Gastrocnemius medialis (tissue), 4 donors: ENCODE measurements at regions of chr5 and their contacts with region 1.

Region 1: GRCh38 chr5:140220032-140220697 is 45.2 kb downstream of the CYSTM1 start:
- DNase-seq: peak in 1 of 2 donors; percentile 11
- ATAC-seq: peak; percentile 10
- H3K4me3 ChIP-seq: no peak overlapping the region
- H3K27ac ChIP-seq: peak overlapping the region; percentile 84 to 97 (median 94)
- H3K4me1 ChIP-seq: peaks cover 89 to 99% of the 10 kb centered on the region in 2 donors
- H3K27me3 ChIP-seq: no peaks in the 10 kb centered on the region
- CTCF ChIP-seq: no peak
- POLR2A ChIP-seq: peak in 1 of 2 donors; percentile 11

Region 2: DNA sequence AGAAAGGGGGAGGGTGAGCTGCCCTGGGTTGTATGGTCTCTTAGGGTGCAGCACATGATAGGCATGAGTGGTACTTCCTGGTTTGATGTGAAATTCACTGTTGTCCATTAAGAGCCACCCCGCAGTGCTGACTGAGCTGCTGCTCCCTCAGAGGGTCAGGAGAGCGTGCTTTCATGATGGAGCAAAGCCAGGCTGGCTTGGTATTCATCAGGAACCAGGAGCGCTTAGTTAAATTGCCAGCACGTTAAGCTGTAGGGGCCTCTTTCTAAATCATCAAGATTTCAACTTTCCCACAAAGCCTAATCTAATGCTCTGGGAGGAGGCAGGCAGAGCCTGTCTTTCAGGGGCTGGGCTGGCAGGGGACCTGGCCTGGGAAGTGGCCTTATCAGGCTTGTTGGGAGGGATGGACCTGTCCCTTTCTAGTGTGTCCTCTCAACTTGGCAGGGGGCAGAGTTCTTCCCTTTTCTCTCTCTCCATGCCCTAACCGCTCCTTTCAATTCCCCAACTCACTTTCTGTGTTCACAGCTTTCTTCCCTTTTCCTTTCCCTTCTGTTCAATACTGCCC is 37.3 kb before region 1 on chr5:
- in situ Hi-C with region 1: no loop called
- intact Hi-C with region 1: loop called (anchors 2 kb)
- DNase-seq: peak; percentile 37 to 51
- ATAC-seq: peak; percentile 18 to 31
- H3K4me3 ChIP-seq: no peak overlapping the region
- H3K27ac ChIP-seq: peak overlapping the region; percentile 97 to 99 (median 98)
- H3K4me1 ChIP-seq: peaks cover 77 to 88% of the 10 kb centered on the region in 2 donors
- H3K27me3 ChIP-seq: no peaks in the 10 kb centered on the region
- CTCF ChIP-seq: no peak
- POLR2A ChIP-seq: no peak

Region 3: GRCh38 chr5:140312067-140312790 is 92.1 kb after region 1 on chr5:
- in situ Hi-C with region 1: no loop called
- intact Hi-C with region 1: no loop called
- DNase-seq: peak in 1 of 2 donors; percentile 26
- ATAC-seq: peak; percentile 51 to 53
- H3K4me3 ChIP-seq: no peak overlapping the region
- H3K27ac ChIP-seq: peak overlapping the region; percentile 64 to 76 (median 72)
- H3K4me1 ChIP-seq: peaks cover 25 to 28% of the 10 kb centered on the region in 2 donors
- H3K27me3 ChIP-seq: no peaks in the 10 kb centered on the region
- CTCF ChIP-seq: no peak
- POLR2A ChIP-seq: no peak

Region 4: GRCh38 chr5:140322751-140323731 is 102.9 kb after region 1 on chr5:
- in situ Hi-C with region 1: no loop called
- intact Hi-C with region 1: no loop called
- DNase-seq: peak in 1 of 2 donors; percentile 31
- ATAC-seq: peak; percentile 35 to 55
- H3K4me3 ChIP-seq: no peak overlapping the region
- H3K27ac ChIP-seq: peak overlapping the region; percentile 54 to 71 (median 66)
- H3K4me1 ChIP-seq: peaks cover 26 to 31% of the 10 kb centered on the region in 2 donors
- H3K27me3 ChIP-seq: no peaks in the 10 kb centered on the region
- CTCF ChIP-seq: no peak
- POLR2A ChIP-seq: no peak

Region 5: DNA sequence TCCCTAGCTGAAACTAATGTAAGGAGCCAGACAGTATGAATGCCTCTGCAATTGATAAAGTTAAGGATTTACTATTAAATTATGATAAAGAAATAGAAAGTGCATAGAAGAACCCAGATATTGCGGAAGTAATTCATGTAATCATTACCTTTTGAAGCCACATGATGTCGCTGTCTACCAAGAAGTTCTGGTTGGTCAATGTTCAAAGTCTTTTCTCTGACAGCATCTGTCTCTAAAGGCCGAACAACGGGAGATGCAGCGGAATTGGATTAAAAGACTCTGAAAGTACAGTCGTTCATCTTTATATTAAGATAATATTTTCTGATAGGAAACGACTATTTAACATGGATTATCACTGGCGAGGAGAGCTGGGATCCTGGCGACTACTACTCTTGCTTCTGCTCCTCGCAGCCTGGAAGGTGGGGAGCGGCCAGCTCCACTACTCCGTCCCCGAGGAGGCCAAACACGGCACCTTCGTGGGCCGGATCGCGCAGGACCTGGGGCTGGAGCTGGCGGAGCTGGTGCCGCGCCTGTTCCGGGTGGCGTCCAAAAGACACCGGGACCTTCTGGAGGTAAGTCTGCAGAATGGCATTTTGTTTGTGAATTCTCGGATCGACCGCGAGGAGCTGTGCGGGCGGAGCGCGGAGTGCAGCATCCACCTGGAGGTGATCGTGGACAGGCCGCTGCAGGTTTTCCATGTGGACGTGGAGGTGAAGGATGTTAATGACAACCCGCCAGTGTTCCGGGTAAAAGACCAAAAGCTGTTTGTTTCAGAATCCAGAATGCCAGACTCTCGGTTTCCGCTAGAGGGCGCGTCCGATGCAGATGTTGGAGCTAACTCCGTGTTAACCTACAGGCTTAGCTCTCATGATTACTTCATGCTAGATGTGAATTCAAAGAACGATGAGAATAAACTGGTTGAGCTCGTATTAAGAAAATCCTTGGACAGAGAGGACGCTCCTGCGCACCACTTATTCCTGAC is 621.1 kb after region 1 on chr5 and contains the start of gene PCDHA8:
- in situ Hi-C with region 1: no loop called
- intact Hi-C with region 1: no loop called
- DNase-seq: no peak
- ATAC-seq: no peak
- H3K4me3 ChIP-seq: no peak within 1 kb of the TSS
- H3K27ac ChIP-seq: no peak within 1 kb of the TSS
- H3K4me1 ChIP-seq: no peaks in the 10 kb centered on the region
- H3K27me3 ChIP-seq: peaks cover 0 to 6% (median 3%) of the 10 kb centered on the region in 3 donors
- CTCF ChIP-seq: no peak
- POLR2A ChIP-seq: no peak
- total RNA-seq, gene PCDHA8: 0.18 TPM in 1 of 4 donors, not detected in the others

Region 6: GRCh38 chr5:141192110-141192732 is 972.1 kb after region 1 on chr5 and contains the start of gene PCDHB10:
- in situ Hi-C with region 1: no loop called
- intact Hi-C with region 1: no loop called
- DNase-seq: no peak
- ATAC-seq: no peak
- H3K4me3 ChIP-seq: no peak within 1 kb of the TSS
- H3K27ac ChIP-seq: no peak within 1 kb of the TSS
- H3K4me1 ChIP-seq: no peaks in the 10 kb centered on the region
- H3K27me3 ChIP-seq: peaks cover 0 to 8% (median 0%) of the 10 kb centered on the region in 3 donors
- CTCF ChIP-seq: peak in 1 of 5 experiments; percentile 32
- POLR2A ChIP-seq: no peak
- total RNA-seq, gene PCDHB10: 0.23 to 0.61 (median 0.54) TPM